BJ (cell line): ENCODE measurements at regions of chr11 and their contacts with region 1.

Region 1: GRCh38 chr11:128026596-128026995 is 560.8 kb downstream of the ETS1 start:
- DNase-seq: peak; percentile 99
- H3K4me3 ChIP-seq: no peak overlapping the region
- H3K27me3 ChIP-seq: no peaks in the 10 kb centered on the region
- CTCF ChIP-seq: no peak

Region 2: GRCh38 chr11:128610721-128611617 is 584.4 kb after region 1 on chr11:
- CTCF ChIA-PET with region 1: no interaction called
- POLR2A ChIA-PET with region 1: interaction called, 13 read pairs
- DNase-seq: no peak
- H3K4me3 ChIP-seq: no peak overlapping the region
- H3K27me3 ChIP-seq: peaks cover 12% of the 10 kb centered on the region
- CTCF ChIP-seq: no peak